G401 (cell line): ENCODE measurements at regions of chr12 and their contacts with region 1.

Region 1: GRCh38 chr12:110379631-110380030 is 23.9 kb downstream of the ANAPC7 start:
- DNase-seq: no peak

Region 2: GRCh38 chr12:110280779-110281548 is 98.7 kb before region 1 on chr12 and contains the start of gene ATP2A2:
- in situ Hi-C with region 1: loop called (anchors 10 kb)
- DNase-seq: peak; percentile 89
- total RNA-seq, gene ATP2A2: 15.1 and 20.3 TPM in 2 replicates

Region 3: GRCh38 chr12:110312581-110313360 is 66.9 kb before region 1 on chr12:
- in situ Hi-C with region 1: no loop called
- DNase-seq: no peak

Region 4: DNA sequence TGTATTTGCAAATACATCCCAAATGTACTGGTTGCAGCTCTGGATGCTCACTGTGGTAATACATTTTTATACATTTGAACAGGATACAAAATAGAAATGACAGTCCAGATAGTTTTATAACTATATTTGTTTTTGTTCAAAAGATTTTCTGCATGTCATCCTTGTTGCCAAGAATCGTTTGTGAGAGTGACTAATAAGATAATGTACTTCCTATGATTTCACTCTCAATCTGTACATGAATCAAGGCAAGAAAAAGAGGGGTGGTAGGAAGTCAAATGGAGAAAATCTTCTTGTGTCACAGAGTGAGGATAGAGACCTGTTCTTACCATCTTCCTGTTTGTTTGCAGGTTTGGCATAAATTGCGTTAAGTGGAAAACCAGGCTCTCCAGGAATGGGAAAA is 56.6 kb after region 1 on chr12:
- in situ Hi-C with region 1: no loop called
- DNase-seq: no peak

Region 5: DNA sequence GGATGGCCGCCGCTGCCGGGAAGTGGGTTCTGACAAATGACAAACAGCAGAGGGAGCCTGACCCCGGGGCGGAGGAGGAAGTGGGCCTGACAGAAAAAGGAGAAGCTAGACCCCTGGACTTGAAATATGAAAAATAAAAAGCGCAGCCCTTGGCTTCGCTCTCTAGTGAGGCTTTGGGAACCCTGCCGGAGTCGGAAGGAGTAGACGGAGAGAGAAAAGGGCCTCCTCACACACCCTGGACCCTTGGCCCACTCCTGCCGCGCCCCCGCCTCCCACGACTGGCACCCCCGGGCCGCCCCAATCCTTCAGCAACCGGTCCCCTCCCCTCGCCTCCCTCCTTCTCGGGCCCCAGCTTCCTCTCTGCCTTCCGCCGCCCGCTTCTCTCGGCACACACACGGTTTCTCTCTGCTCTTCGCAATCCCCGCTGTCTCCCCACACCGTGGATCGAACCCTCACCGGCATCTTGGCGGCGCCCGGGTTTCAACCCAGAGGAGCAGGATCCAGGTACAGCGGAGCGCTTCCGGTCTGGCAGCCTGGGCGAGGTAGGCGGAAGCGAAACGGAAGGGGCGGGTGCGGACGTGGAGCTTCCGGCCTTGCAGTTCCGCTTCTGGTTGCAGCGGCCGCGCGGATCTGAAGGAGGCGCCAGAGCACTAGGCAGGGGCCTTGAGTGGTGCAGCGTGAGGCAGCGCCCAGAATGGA is 70.3 kb after region 1 on chr12 and contains the start of gene ARPC3:
- in situ Hi-C with region 1: no loop called
- DNase-seq: peak; percentile 96
- total RNA-seq, gene ARPC3: 601 and 663 TPM in 2 replicates